Esophagus muscularis mucosa (tissue), 4 donors: ENCODE measurements at regions of chr9 and their contacts with region 1.

Region 1: DNA sequence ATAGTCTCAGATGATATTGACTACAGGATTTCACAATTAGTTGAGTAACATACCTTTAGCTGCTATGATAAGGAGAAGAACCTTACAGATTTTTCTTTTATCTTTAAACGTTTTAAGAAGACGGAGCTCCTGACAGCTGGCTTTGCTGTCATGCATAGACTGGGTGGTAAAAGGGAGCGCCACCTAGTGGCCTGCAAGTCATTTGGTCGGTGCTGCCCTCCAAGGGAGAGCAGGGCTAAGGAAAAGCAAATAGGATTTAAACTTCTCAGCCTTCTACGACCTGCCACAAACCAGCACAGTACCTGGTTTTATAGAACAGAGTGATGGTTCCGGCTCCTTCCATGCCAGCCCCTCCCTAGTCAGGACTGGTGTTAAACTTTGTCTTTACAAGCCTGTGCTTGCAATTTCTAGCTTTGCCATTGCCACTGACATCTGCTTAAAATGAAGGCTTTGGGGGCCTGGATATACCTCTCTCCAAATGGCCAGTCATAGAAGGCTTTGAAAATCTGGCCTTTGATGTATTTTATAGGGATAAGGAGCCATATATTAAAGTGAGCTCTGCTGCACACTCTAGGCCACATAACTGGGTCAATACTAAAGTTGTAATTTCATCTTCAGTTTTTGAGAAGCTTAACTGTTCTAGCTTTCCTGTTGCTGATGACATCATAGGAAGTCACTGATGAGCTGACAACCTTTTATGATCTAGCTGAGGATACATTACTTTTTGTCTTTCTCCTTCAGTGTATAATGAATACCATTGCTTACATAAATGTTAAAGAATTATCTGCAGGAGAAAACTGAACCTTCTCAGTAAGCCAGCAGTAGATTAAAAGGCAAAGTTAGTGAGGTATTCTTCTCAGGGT is 31.1 kb upstream of the ADAMTSL1 start:
- DNase-seq: no peak
- H3K4me3 ChIP-seq: no peak overlapping the region
- H3K27ac ChIP-seq: peak overlapping the region; percentile 11 to 61 (median 36)
- H3K4me1 ChIP-seq: peaks cover 28 to 66% (median 55%) of the 10 kb centered on the region in 4 donors
- H3K27me3 ChIP-seq: no peaks in the 10 kb centered on the region
- CTCF ChIP-seq: peak; percentile 80 to 92 (median 88)
- EP300 ChIP-seq: no peak
- POLR2A ChIP-seq: no peak

Region 2: DNA sequence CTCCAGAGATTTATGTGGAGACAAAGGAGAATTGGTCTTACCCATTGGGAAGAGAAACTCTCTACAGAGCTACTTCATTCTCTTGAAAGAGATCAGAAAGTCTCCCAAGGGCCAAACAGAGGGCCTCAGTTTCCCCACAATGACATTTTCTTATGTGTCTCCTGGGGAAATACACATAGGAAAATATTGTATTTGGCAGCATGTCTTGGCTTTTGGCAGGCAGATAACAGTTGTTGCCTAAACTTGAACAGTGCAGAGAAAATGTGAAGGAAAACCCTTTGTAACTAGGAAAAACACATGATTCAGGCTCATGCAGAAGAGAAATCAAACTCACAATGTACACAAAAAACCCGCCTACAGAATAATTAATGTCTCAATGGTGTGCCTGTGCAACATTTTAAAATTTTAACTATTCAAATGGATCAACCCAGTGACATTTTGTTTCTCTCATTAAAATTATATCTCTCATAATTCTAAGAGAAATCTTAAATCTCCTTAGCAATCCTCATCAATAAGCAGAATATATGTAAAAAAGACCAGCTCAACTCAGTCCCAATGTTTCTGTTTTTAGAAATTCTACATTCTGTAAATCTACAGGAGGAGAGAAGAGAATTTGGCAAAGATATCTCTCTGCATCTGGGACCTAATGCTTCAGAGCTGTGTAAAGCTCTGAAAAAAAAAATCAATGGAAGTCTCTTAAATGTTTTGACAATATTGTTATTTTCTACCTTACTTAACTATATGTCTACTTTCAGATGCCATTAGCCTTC is 236.1 kb after region 1 on chr9:
- intact Hi-C with region 1: loop called (anchors 10 kb)
- DNase-seq: no peak
- H3K4me3 ChIP-seq: no peak overlapping the region
- H3K27ac ChIP-seq: no peak overlapping the region
- H3K4me1 ChIP-seq: peaks cover 0 to 41% (median 32%) of the 10 kb centered on the region in 4 donors
- H3K27me3 ChIP-seq: no peaks in the 10 kb centered on the region
- CTCF ChIP-seq: no peak
- EP300 ChIP-seq: no peak
- POLR2A ChIP-seq: no peak

Region 3: DNA sequence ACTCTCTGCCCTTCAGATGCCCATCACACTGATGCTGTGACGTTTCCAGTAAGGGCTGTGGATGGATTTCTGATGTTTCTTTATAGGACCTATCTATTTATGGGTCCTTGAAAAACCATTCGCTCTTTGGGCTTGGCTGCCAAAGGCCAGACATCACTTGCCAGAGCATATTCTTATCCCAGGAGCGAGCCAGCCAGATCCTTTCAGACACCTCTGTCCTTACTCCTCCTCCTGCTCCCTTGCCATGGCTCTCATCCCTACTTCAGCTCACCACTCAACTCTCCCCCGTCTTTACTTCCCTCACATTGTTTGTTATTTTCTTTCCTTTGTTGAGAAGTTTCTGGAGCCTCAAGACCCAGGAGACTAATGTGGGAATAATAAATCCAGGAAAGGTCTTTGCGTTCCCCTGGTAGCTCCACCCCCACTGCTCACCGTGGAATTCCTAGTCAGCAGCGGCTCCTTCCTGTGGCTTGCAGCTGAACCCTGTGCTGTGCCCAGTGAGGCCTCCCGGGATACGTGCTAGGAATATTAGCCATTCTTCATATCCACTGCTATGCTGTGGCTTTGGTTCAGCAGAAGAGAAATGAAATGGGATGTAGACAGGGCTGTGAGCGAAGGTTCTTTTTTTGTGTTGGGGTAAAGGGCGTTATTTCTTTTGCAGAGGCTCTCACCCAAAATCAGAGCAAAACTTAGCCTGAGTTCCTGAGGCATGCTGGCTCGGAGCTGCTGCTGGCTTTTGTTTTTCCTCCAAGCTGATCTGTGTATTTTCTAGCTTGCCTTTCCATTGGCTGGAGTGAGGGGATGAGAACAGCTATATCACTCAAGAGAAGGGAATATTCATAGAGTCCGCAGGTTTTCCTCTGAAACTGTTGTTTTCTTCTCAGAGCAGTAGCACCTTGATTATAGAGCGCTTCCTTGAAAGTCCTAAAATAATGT is 419.0 kb after region 1 on chr9:
- intact Hi-C with region 1: loop called (anchors 10 kb)
- DNase-seq: no peak
- H3K4me3 ChIP-seq: peak overlapping the region; percentile 5 to 26 (median 20)
- H3K27ac ChIP-seq: peak overlapping the region; percentile 64 to 80 (median 73)
- H3K4me1 ChIP-seq: peaks cover 18 to 58% (median 48%) of the 10 kb centered on the region in 4 donors
- H3K27me3 ChIP-seq: no peaks in the 10 kb centered on the region
- CTCF ChIP-seq: peak; percentile 28 to 31 (median 29)
- EP300 ChIP-seq: no peak
- POLR2A ChIP-seq: no peak

Region 4: GRCh38 chr9:19018201-19018600 is 575.3 kb after region 1 on chr9:
- intact Hi-C with region 1: loop called (anchors 5 kb)
- DNase-seq: no peak
- H3K4me3 ChIP-seq: no peak overlapping the region
- H3K27ac ChIP-seq: no peak overlapping the region
- H3K4me1 ChIP-seq: peaks cover 0 to 3% (median under 1%) of the 10 kb centered on the region in 4 donors
- H3K27me3 ChIP-seq: no peaks in the 10 kb centered on the region
- CTCF ChIP-seq: no peak
- EP300 ChIP-seq: no peak
- POLR2A ChIP-seq: no peak